ENCODE measurements at regions of chr1 and their contacts with region 1.

Region 1: GRCh38 chr1:117015719-117016118 is 14.2 kb downstream of the CD101 start:
- DNase-seq: no peak
- ATAC-seq: no peak
- H3K4me3 Mint-ChIP-seq: no peak overlapping the region
- H3K27ac Mint-ChIP-seq: peak overlapping the region; percentile 10
- H3K4me1 Mint-ChIP-seq: peaks cover 50% of the 10 kb centered on the region
- H3K27me3 Mint-ChIP-seq: no peaks in the 10 kb centered on the region

Region 2: GRCh38 chr1:116821763-116822162 is 194.0 kb before region 1 on chr1:
- CTCF ChIA-PET with region 1: no interaction called
- POLR2A ChIA-PET with region 1: no interaction called
- intact Hi-C with region 1: no loop called
- DNase-seq: no peak
- ATAC-seq: peak; percentile 5
- H3K4me3 Mint-ChIP-seq: no peak overlapping the region
- H3K27ac Mint-ChIP-seq: no peak overlapping the region
- H3K4me1 Mint-ChIP-seq: peaks cover 53% of the 10 kb centered on the region
- H3K27me3 Mint-ChIP-seq: no peaks in the 10 kb centered on the region

Region 3: DNA sequence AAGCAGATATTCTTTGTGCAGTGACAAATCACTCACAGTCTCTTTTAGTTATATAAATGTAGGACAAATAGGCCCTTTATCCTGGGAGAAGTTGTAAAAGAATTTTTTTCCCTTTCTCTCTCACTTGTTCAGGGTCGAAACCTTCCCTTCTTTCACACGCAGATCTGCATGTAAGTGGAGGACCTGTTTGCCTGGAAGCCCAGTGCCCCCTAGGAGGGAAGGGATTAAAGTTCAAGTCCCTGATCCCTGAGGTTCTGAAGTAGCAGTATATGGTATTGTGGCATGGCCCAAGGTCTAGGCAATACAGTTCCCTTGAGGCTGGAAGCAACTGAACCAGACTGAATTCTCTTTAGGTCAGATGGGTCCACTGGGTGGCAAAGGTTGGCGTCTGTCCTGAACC is 154.6 kb before region 1 on chr1:
- CTCF ChIA-PET with region 1: no interaction called
- POLR2A ChIA-PET with region 1: no interaction called
- intact Hi-C with region 1: no loop called
- DNase-seq: no peak
- ATAC-seq: no peak
- H3K4me3 Mint-ChIP-seq: no peak overlapping the region
- H3K27ac Mint-ChIP-seq: no peak overlapping the region
- H3K4me1 Mint-ChIP-seq: no peaks in the 10 kb centered on the region
- H3K27me3 Mint-ChIP-seq: no peaks in the 10 kb centered on the region

Region 4: GRCh38 chr1:116971258-116971860 is 44.4 kb before region 1 on chr1:
- CTCF ChIA-PET with region 1: no interaction called
- POLR2A ChIA-PET with region 1: no interaction called
- intact Hi-C with region 1: no loop called
- DNase-seq: no peak
- ATAC-seq: no peak
- H3K4me3 Mint-ChIP-seq: no peak overlapping the region
- H3K27ac Mint-ChIP-seq: no peak overlapping the region
- H3K4me1 Mint-ChIP-seq: no peaks in the 10 kb centered on the region
- H3K27me3 Mint-ChIP-seq: no peaks in the 10 kb centered on the region

Region 5: GRCh38 chr1:117001254-117001927 is 14.3 kb before region 1 on chr1 and contains the start of gene CD101:
- CTCF ChIA-PET with region 1: interaction called, 3 read pairs
- POLR2A ChIA-PET with region 1: no interaction called
- intact Hi-C with region 1: loop called in 1 of 2 experiments (anchors 1 kb)
- DNase-seq: peak; percentile 70
- ATAC-seq: peak; percentile 95
- H3K4me3 Mint-ChIP-seq: peak within 1 kb of the TSS; percentile 3
- H3K27ac Mint-ChIP-seq: peak within 1 kb of the TSS; percentile 66
- H3K4me1 Mint-ChIP-seq: peaks cover 53% of the 10 kb centered on the region
- H3K27me3 Mint-ChIP-seq: peaks cover 3% of the 10 kb centered on the region
- total RNA-seq, gene CD101: 0.30 to 0.60 TPM

Region 6: GRCh38 chr1:117290890-117291289 is 275.2 kb after region 1 on chr1:
- CTCF ChIA-PET with region 1: no interaction called
- POLR2A ChIA-PET with region 1: no interaction called
- intact Hi-C with region 1: no loop called
- DNase-seq: no peak
- ATAC-seq: no peak
- H3K4me3 Mint-ChIP-seq: no peak overlapping the region
- H3K27ac Mint-ChIP-seq: no peak overlapping the region
- H3K4me1 Mint-ChIP-seq: no peaks in the 10 kb centered on the region
- H3K27me3 Mint-ChIP-seq: no peaks in the 10 kb centered on the region